Dorsolateral prefrontal cortex (tissue), 120 donors: ENCODE measurements at regions of chr6 and their contacts with region 1.

Region 1: GRCh38 chr6:163554663-163555062 is 140.1 kb downstream of the QKI start:
- DNase-seq: peak in 4 of 10 donors; percentile 41 to 65 (median 50)
- H3K4me3 ChIP-seq: peak overlapping the region in 1 of 59 donors; percentile 11
- H3K27ac ChIP-seq: peak overlapping the region in 42 of 59 donors; percentile 0 to 73 (median 47)
- H3K27me3 ChIP-seq: no peaks in the 10 kb centered on the region
- CTCF ChIP-seq: peak in 50 of 56 donors; percentile 21 to 66 (median 46)

Region 2: GRCh38 chr6:163507965-163508364 is 46.7 kb before region 1 on chr6:
- intact Hi-C with region 1: loop called in 1 of 2 experiments (anchors 5 kb)
- DNase-seq: no peak
- H3K4me3 ChIP-seq: no peak overlapping the region
- H3K27ac ChIP-seq: peak overlapping the region in 2 of 59 donors; percentile 18 to 41
- H3K27me3 ChIP-seq: no peaks in the 10 kb centered on the region
- CTCF ChIP-seq: no peak